ENCODE measurements at regions of chr1 and their contacts with region 1.

Region 1: DNA sequence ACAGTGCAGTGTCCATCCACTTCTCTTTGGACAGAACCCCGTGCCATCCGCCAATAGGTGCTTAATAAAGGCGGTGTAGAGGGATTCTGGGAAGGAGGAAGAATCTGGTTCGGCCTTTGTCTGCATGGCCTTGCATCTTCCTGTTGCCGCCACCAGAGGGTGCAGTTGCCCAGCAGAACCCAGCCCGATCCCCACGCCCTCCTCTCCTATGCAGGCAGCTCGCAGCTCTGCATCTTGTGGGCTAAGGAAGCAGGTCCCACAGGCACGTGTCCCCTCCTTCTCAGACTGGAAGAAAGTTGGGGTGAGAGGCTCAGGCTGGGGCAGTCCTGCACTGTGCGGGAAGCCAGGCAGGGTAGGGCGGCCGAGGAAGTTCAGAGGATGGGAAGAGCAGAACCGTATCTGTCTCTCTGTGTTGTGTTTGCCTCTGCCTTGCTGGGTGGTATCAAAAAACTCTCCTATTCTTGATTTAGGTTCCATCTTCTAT is 20.8 kb downstream of the NAV1 start:
- DNase-seq: peak in 1 of 2 donors; percentile 96
- H3K4me3 ChIP-seq: no peak overlapping the region
- CTCF ChIP-seq: peak in 1 of 3 donors; percentile 83
- POLR2A ChIP-seq: no peak

Region 2: GRCh38 chr1:201299968-201300367 is 259.8 kb before region 1 on chr1:
- intact Hi-C with region 1: no loop called
- DNase-seq: peak in 1 of 2 donors; percentile 80
- H3K4me3 ChIP-seq: no peak overlapping the region
- CTCF ChIP-seq: no peak
- POLR2A ChIP-seq: no peak

Region 3: GRCh38 chr1:201703621-201704439 is 144.1 kb after region 1 on chr1:
- intact Hi-C with region 1: loop called (anchors 2 kb)
- DNase-seq: peak; percentile 65 to 97
- H3K4me3 ChIP-seq: no peak overlapping the region
- CTCF ChIP-seq: peak in 2 of 3 donors; percentile 59 to 97
- POLR2A ChIP-seq: no peak

Region 4: DNA sequence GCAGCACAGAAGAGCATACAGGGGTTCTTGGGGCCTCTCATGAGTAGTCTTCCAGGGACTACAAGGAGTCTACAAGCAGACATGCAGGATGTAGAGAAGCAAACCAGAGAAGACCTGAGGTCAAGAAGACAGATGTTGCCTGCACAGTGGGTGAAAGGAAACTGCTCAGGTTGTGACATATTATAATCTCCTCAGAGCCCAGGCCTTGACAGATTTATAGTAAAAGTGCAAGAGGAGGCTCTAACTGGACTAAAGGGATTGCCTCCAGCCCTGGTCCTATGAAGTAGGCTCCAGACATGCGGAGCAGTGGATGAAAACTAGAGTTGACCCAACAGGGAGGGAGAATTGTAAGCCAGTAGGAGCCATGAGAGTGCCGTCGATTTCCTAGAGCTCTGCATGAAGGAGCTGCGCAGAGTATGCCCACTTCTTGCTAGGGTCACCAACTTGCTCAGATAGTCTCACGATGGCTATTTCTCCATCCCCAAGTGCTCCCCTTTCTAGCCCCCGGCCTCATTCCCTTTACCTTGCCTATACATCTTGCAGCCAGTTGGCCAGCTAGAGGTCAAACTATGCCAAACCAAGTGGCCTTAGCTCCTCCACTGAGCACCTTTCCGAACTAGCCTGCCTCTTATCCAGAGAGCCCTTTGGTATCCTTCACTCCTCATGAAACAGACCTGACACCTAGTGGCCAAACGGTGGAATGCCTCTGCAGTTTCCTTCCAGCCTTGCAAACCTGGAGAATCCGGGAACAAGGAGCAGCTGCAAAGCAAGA is 233.0 kb after region 1 on chr1:
- intact Hi-C with region 1: loop called (anchors 10 kb)
- DNase-seq: peak; percentile 86 to 94
- H3K4me3 ChIP-seq: no peak overlapping the region
- CTCF ChIP-seq: peak in 1 of 3 donors; percentile 91
- POLR2A ChIP-seq: no peak

Region 5: DNA sequence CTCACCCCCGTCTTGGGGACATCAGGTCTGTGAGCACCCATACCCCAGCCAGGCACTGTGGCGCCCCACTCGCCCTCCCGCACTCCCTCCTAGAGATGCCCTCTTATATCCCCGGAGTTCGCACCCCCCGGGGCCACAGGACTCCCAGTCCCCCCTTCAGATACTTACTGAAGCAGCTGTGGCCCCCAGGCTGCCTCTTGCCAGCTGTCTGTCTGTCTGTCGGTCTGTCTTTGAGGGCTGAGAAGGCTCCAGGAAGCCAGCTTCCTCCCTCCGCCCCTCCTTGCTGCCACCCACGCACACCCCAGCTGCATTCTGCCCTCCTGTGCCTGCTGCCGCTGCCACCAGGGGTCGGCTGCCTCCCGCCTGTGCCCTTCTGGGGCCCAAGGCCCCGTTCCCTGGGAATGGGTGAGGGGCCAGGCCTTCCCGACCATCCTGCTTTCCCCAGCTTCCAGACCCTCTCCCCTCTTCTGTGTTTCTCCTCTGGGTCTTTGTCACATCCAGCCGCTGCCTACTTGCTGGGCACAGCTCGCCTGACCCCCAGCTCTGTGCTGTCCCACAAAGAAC is 600.7 kb after region 1 on chr1 and contains the start of gene PTPN7:
- intact Hi-C with region 1: no loop called
- DNase-seq: no peak
- H3K4me3 ChIP-seq: no peak within 1 kb of the TSS
- CTCF ChIP-seq: no peak
- POLR2A ChIP-seq: no peak
- total RNA-seq, gene PTPN7: 1.6 to 2.4 (median 2.2) TPM